Activated naive CD4-positive, alpha-beta T cell treated with anti-CD3 and anti-CD28 coated beads for 36 hours (primary cell): ENCODE measurements at regions of chr20 and their contacts with region 1.

Region 1: DNA sequence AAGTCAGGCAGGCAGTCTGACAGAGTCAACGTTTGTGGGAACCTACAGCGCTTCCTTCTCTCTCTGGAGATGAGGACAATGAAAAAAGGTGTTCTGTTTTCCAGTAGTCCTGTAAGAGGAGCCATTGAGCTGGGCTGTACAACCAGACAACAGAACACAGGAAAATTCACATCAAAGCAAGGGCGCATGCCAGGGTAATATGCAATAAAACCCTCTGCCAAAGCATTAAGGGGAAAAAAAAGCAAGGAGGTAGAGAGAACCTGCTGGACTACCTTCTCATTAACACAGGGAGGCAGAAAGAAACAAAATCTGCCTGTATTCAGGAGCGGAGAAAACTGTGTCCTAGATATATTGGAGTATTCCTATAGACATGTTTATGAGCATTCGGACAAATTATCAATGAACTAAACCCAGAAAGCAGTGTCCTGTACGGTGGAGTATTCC is 1.3 kb downstream of the RNF24 start:
- DNase-seq: peak; percentile 52
- H3K4me3 Mint-ChIP-seq: peak overlapping the region; percentile 81
- H3K27ac Mint-ChIP-seq: no peak overlapping the region
- H3K4me1 Mint-ChIP-seq: peaks cover 32% of the 10 kb centered on the region
- H3K27me3 Mint-ChIP-seq: no peaks in the 10 kb centered on the region

Region 2: DNA sequence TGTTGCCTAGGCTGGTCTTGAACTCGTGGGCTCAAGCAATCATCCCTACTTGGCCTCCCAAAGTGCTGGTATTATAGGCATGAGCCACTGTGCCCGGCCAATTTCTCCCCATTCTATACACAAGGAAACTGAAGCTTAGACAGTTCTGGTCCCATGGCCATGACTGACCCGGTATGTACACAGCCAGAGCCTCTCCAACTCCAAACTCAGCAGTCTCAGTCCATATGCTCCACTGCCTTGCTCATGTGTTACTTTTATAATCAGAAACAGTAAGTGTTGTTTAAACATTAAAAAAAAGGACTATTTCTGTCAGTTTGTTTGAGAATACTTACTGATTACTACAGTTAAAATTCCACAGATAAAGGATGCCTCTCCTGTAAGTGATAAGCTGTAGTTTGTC is 49.3 kb before region 1 on chr20:
- CTCF ChIA-PET with region 1: no interaction called
- intact Hi-C with region 1: no loop called
- DNase-seq: no peak
- H3K4me3 Mint-ChIP-seq: no peak overlapping the region
- H3K27ac Mint-ChIP-seq: no peak overlapping the region
- H3K4me1 Mint-ChIP-seq: peaks cover 11% of the 10 kb centered on the region
- H3K27me3 Mint-ChIP-seq: no peaks in the 10 kb centered on the region

Region 3: DNA sequence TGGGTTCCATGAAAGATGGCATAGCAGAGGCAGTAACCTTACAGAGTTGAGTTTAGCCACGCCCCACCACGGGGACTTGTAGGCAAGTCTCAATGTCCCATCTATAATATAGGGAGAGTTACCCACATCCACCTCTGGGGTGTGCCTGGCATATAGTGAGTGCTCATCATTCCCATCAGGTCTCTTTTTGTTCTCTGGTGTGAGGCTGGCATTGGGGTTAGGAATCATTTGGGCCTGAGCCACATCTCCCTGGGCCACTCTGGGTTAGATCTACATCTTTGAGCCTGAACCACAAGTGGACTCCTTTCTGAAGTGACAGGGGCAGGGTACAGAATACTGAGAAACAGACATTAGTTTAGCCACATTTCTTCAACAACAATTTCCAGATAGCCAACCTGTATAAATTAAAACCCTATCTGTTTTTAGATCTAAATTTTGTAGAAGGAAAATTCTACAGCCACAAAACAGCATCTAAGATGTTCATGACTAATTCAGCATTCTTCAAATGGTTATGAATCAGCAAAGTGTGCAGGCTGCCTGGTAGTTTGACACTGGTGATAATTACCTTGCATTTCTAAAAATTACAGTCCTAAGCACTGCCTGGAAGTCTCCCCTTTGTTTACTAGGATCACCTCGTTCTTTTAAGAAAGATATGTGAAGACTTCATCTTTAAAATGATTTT is 18.8 kb before region 1 on chr20:
- CTCF ChIA-PET with region 1: interaction called, 6 read pairs
- intact Hi-C with region 1: loop called (anchors 2 kb)
- DNase-seq: peak; percentile 34
- H3K4me3 Mint-ChIP-seq: no peak overlapping the region
- H3K27ac Mint-ChIP-seq: peak overlapping the region; percentile 68
- H3K4me1 Mint-ChIP-seq: peaks cover 46% of the 10 kb centered on the region
- H3K27me3 Mint-ChIP-seq: no peaks in the 10 kb centered on the region

Region 4: GRCh38 chr20:4038047-4038459 is 24.0 kb after region 1 on chr20:
- CTCF ChIA-PET with region 1: no interaction called
- intact Hi-C with region 1: loop called (anchors 1 kb)
- DNase-seq: peak; percentile 90
- H3K4me3 Mint-ChIP-seq: peak overlapping the region; percentile 82
- H3K27ac Mint-ChIP-seq: peak overlapping the region; percentile 95
- H3K4me1 Mint-ChIP-seq: peaks cover 15% of the 10 kb centered on the region
- H3K27me3 Mint-ChIP-seq: no peaks in the 10 kb centered on the region

Region 5: GRCh38 chr20:4091490-4092479 is 77.7 kb after region 1 on chr20:
- CTCF ChIA-PET with region 1: interaction called, 4 read pairs
- intact Hi-C with region 1: loop called (anchors 2 kb)
- DNase-seq: peak; percentile 66
- H3K4me3 Mint-ChIP-seq: no peak overlapping the region
- H3K27ac Mint-ChIP-seq: no peak overlapping the region
- H3K4me1 Mint-ChIP-seq: no peaks in the 10 kb centered on the region
- H3K27me3 Mint-ChIP-seq: peaks cover 2% of the 10 kb centered on the region

Region 6: DNA sequence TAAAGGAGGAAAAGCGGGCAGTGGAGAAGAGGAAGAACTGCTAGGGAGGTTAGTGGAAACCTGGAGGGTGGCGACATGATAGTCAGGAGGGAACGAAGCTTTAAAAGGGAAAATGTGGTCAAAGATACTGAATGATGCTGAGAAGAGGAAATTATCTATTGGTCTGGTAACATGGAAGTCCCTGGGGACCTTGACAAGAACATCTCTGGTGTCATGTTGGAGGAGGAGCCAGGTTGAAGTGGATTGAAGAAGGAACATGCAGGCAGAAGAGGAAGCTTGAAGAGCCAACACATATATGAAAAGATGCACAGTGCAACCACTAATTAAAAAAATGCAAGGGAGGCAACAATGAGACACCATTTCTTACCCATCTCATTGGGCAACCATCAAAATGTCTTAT is 253.2 kb after region 1 on chr20:
- CTCF ChIA-PET with region 1: no interaction called
- intact Hi-C with region 1: no loop called
- DNase-seq: no peak
- H3K4me3 Mint-ChIP-seq: no peak overlapping the region
- H3K27ac Mint-ChIP-seq: no peak overlapping the region
- H3K4me1 Mint-ChIP-seq: no peaks in the 10 kb centered on the region
- H3K27me3 Mint-ChIP-seq: peaks cover 12% of the 10 kb centered on the region